ENCODE measurements at regions of chr1 and their contacts with region 1.

Region 1: DNA sequence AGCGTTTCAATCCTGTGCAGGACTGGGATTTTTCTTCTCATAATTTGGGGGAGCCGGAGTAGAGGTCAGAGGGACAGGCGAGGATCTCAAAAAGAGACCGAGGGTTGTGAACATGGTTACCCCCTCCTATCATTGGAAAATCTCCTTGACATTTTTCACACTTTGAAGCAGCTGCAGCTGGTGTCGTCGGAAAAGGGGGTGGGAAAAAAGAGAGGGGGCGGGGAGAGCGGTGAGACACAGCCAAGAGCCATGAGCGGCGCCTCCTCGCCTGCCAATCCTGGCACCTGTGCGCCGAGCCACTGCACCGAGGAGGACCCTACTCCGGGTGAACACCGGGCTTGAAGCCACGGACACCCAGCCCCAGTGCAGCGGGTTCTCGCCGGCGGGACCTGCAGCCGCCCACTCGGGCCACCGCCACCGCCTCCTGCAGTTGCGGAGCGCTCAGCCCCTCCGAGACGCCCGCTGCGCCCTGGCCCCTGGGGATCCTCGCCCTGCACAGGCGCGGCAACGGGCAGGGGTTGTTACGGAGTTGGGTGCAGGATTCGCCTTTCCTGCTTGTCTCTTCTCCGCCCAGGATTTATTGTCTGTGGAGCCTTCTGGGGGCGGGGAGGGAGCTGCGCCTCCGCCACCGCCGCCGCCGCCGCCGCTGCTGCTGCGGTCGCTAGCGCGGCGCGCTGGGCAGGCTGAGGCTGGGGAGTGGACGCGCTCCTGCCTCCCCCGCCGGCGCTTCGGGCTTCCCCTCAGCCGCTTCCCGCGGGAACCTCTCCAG is at the start of gene LRRC7:
- DNase-seq: peak in 9 of 10 donors; percentile 35 to 72 (median 53)
- H3K4me3 ChIP-seq: peak within 1 kb of the TSS; percentile 50 to 89 (median 77)
- H3K27ac ChIP-seq: peak within 1 kb of the TSS; percentile 79 to 97 (median 93)
- H3K27me3 ChIP-seq: peaks cover 0 to 7% (median 0%) of the 10 kb centered on the region in 45 donors
- CTCF ChIP-seq: peak in 9 of 56 donors; percentile 7 to 27 (median 12)
- total RNA-seq, gene LRRC7: 71.3 to 205 (median 145) TPM

Region 2: GRCh38 chr1:69103705-69104385 is 464.0 kb before region 1 on chr1:
- intact Hi-C with region 1: loop called (anchors 5 to 10 kb)
- DNase-seq: peak in 1 of 10 donors; percentile 29
- H3K4me3 ChIP-seq: no peak overlapping the region
- H3K27ac ChIP-seq: peak overlapping the region in 26 of 59 donors; percentile 1 to 71 (median 41)
- H3K27me3 ChIP-seq: no peaks in the 10 kb centered on the region
- CTCF ChIP-seq: no peak

Region 3: DNA sequence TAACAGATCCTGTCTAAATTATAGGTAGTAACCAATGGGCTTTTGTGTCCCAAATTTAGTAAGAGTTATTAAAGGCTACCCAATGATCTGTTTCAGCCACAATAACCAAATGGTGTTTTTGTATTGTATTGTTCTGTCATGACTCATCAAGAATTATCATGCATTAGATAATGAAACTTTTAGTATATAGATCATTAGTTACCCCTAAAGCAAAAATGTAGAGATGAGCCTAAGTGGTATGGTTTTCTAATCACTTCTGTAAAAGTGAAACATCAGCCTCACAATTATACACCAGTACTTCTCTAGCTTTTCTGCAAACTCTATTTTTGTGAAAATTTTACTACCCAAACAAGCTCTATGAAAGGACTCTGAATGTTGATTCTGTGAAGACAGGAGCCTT is 71.3 kb after region 1 on chr1:
- intact Hi-C with region 1: loop called in 1 of 2 experiments (anchors 5 kb)
- DNase-seq: no peak
- H3K4me3 ChIP-seq: peak overlapping the region in 30 of 59 donors; percentile 1 to 45 (median 20)
- H3K27ac ChIP-seq: peak overlapping the region in 49 of 59 donors; percentile 5 to 82 (median 52)
- H3K27me3 ChIP-seq: no peaks in the 10 kb centered on the region
- CTCF ChIP-seq: no peak

Region 4: DNA sequence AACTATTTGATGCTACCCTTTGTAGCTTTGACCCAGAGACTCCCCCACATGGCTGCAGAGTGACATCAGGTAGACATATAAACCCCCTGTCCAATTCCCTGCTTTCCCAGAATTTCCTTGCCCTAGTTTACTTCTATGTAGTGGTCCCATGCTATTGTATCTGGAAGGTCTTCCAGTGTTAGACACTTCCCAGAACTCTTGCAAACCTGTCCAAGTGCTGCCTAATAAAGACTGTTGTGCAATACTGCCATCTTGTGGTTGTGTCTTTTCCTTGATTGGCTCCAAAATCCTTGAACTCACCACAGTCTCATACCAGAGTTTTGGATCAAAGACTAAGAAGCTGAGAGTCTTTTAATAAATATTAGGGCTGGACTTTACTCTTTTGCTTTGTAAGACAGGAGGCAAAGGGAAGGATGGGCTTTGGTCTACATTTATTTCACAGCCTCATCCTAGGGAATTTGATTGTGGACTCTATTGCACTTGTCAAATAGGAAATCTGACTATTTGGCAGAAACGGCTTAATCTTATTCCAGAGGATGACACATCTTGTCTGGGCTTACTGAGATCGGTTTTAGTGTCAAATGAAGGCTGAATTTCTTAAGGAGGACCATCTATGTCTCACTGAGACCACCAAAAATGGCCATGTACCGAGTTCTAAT is 169.8 kb after region 1 on chr1:
- intact Hi-C with region 1: loop called (anchors 2 to 5 kb)
- DNase-seq: no peak
- H3K4me3 ChIP-seq: peak overlapping the region in 5 of 59 donors; percentile 6 to 27 (median 10)
- H3K27ac ChIP-seq: peak overlapping the region in 26 of 59 donors; percentile 1 to 73 (median 37)
- H3K27me3 ChIP-seq: no peaks in the 10 kb centered on the region
- CTCF ChIP-seq: peak; percentile 44 to 84 (median 68)

Measured in dorsolateral prefrontal cortex (tissue), 120 donors.